ENCODE measurements at regions of chr2 and their contacts with region 1.

Region 1: GRCh38 chr2:68766376-68766845 is 31.8 kb downstream of the ARHGAP25 start:
- DNase-seq: peak; percentile 82
- ATAC-seq: peak; percentile 79
- H3K4me3 Mint-ChIP-seq: peak overlapping the region; percentile 83
- H3K27ac Mint-ChIP-seq: peak overlapping the region; percentile 97
- H3K4me1 Mint-ChIP-seq: peaks cover 91% of the 10 kb centered on the region
- H3K27me3 Mint-ChIP-seq: no peaks in the 10 kb centered on the region

Region 2: DNA sequence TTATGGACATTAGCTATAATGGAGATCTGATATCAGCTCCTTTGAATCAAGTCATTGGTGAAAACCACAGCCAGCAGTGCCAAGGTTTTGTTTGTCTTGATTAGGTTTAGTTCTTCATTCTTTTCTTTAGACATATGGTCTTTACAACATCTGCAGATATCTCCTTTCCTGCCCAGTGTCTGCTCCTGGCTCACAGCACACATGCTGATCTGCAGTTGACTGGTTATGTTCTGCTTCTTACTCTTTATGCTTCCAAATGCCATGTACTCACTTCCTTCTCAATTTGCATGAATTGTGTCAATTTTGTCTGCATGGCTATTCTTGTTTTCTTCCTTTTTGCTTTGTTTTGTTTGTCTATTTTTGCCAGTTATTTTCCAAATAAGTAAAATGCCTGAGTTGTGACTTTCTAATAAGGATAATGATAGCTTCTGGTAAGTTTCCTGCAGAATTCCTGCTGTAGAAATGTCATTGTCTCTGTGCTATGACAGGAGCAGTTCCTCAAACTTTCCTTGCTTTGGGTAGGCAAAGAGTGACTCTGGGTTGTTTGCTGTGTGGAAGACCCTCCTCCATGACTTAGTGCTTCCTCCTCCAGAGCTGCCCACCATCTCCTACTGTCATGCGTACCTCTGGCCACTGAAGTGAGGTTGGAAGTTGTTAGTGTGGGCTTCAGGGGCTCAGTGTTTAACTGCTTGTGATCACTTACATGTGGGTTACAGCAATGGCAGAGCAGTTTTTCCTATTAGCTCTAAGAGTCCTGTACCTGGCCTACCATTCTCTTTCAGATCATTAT is 23.6 kb before region 1 on chr2:
- CTCF ChIA-PET with region 1: interaction called, 448 read pairs
- POLR2A ChIA-PET with region 1: interaction called, 9 read pairs
- DNase-seq: peak; percentile 23
- ATAC-seq: no peak
- H3K4me3 Mint-ChIP-seq: no peak overlapping the region
- H3K27ac Mint-ChIP-seq: peak overlapping the region; percentile 12
- H3K4me1 Mint-ChIP-seq: peaks cover 93% of the 10 kb centered on the region
- H3K27me3 Mint-ChIP-seq: no peaks in the 10 kb centered on the region

Region 3: GRCh38 chr2:68787356-68787755 is 20.9 kb after region 1 on chr2:
- CTCF ChIA-PET with region 1: no interaction called
- POLR2A ChIA-PET with region 1: no interaction called
- DNase-seq: no peak
- ATAC-seq: no peak
- H3K4me3 Mint-ChIP-seq: no peak overlapping the region
- H3K27ac Mint-ChIP-seq: peak overlapping the region; percentile 47
- H3K4me1 Mint-ChIP-seq: peaks cover 10% of the 10 kb centered on the region
- H3K27me3 Mint-ChIP-seq: no peaks in the 10 kb centered on the region

Region 4: GRCh38 chr2:68857855-68858456 is 91.5 kb after region 1 on chr2:
- CTCF ChIA-PET with region 1: no interaction called
- POLR2A ChIA-PET with region 1: no interaction called
- DNase-seq: no peak
- ATAC-seq: no peak
- H3K4me3 Mint-ChIP-seq: no peak overlapping the region
- H3K27ac Mint-ChIP-seq: no peak overlapping the region
- H3K4me1 Mint-ChIP-seq: no peaks in the 10 kb centered on the region
- H3K27me3 Mint-ChIP-seq: peaks cover 19% of the 10 kb centered on the region

Measured in activated CD8-positive, alpha-beta T cell treated with anti-CD3 and anti-CD28 coated beads, Interleukin-2, amount 10 ng/mL, durations not matched to agents 7 days and 5 days (primary cell).